Activated CD8-positive, alpha-beta T cell treated with anti-CD3 and anti-CD28 coated beads for 36 hours (primary cell): ENCODE measurements at regions of chr20 and their contacts with region 1.

Region 1: GRCh38 chr20:54284934-54285704 is 77.2 kb downstream of the PFDN4 start:
- DNase-seq: peak; percentile 67
- ATAC-seq: peak; percentile 89
- H3K4me3 Mint-ChIP-seq: peak overlapping the region; percentile 70
- H3K27ac Mint-ChIP-seq: peak overlapping the region; percentile 91
- H3K4me1 Mint-ChIP-seq: peaks cover 21% of the 10 kb centered on the region
- H3K27me3 Mint-ChIP-seq: peaks cover 15% of the 10 kb centered on the region
- CTCF ChIP-seq: no peak

Region 2: DNA sequence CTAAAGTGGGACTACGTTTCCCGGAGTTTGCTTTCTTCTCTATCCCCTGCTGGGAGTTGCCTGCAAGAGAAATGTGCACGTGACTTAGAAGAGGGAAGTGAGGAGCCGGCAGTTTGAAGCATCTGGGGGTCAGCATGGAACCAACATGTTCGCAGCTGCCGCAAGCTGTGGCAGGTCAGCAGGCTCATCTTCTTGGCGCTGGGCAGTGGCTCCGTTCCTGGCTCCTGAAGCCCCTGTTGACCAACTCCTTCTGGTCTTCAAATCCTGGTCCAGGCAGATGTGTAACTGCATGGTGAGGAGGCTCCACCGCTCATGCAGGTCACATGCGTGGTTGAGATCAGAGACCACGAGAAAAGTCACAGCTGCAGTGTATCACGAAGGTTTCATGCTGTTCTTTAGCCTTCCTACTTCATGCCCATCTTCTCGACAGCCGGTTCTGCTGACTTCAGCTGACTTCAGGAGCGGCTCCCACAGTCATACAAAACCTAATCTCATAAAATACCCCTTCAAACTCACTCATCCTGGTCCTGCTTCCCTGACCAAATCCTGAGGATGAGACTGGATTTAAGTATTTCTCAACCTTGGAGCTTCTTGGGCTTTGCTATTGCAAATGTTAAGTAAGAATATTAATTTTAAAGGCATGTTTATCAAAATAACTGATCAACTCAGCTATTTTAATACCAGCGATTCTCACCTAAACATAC is 169.8 kb before region 1 on chr20:
- CTCF ChIA-PET with region 1: no interaction called
- POLR2A ChIA-PET with region 1: no interaction called
- intact Hi-C with region 1: no loop called
- DNase-seq: no peak
- ATAC-seq: no peak
- H3K4me3 Mint-ChIP-seq: no peak overlapping the region
- H3K27ac Mint-ChIP-seq: no peak overlapping the region
- H3K4me1 Mint-ChIP-seq: no peaks in the 10 kb centered on the region
- H3K27me3 Mint-ChIP-seq: peaks cover 8% of the 10 kb centered on the region
- CTCF ChIP-seq: no peak

Region 3: GRCh38 chr20:54219751-54220426 is 65.2 kb before region 1 on chr20:
- CTCF ChIA-PET with region 1: no interaction called
- POLR2A ChIA-PET with region 1: no interaction called
- intact Hi-C with region 1: loop called (anchors 2 kb)
- DNase-seq: no peak
- ATAC-seq: no peak
- H3K4me3 Mint-ChIP-seq: no peak overlapping the region
- H3K27ac Mint-ChIP-seq: no peak overlapping the region
- H3K4me1 Mint-ChIP-seq: peaks cover 23% of the 10 kb centered on the region
- H3K27me3 Mint-ChIP-seq: no peaks in the 10 kb centered on the region
- CTCF ChIP-seq: peak; percentile 41